ENCODE measurements at regions of chr6 and their contacts with region 1.

Region 1: GRCh38 chr6:128767705-128768104 is 115.2 kb upstream of the LAMA2 start:
- DNase-seq: peak; percentile 50

Region 2: GRCh38 chr6:128029826-128030225 is 737.9 kb before region 1 on chr6:
- intact Hi-C with region 1: loop called in 1 of 2 experiments (anchors 5 kb)
- DNase-seq: no peak

Region 3: GRCh38 chr6:128569737-128570679 is 197.7 kb before region 1 on chr6:
- intact Hi-C with region 1: no loop called
- DNase-seq: no peak

Region 4: DNA sequence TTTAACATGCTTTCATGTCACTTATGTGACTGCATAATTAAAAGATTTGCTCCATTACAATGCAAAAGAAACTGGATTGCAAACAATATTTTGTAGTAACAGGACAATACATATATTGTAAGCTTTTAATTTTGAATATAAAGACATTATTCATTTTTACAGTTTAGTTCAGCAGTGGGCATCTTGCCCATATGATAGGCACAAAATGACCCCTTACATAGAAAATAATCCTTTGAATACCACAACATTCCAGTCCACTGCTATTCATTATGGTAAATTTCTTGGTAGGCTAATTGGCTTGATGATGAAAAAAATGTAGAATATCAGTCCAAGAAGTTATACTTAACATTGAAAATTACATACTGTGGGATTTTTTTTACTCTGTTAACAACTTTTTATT is 41.2 kb after region 1 on chr6:
- intact Hi-C with region 1: no loop called
- DNase-seq: no peak

Region 5: DNA sequence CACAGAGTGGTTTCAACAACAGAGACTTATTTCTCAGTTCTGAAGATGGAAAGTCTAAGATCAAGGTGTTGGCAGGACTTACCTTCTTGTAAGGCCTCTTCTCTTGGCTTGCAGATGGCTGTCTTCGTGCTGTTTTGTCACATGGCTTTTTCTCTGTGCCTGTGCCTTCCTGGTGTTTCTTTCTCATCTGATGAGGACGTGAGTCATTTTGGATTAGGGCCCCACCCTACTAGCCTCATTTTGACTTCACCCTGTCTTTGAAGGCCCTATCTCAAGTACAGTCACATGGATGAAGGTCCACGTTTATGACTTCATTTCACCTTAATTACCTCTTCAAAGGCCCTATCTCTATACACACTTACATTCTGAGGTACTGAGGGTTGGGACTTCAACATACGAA is 73.8 kb after region 1 on chr6:
- intact Hi-C with region 1: no loop called
- DNase-seq: no peak

Region 6: GRCh38 chr6:129105035-129105434 is 337.3 kb after region 1 on chr6:
- intact Hi-C with region 1: no loop called
- DNase-seq: no peak